Ascending aorta (tissue), 2 donors: ENCODE measurements at regions of chr2 and their contacts with region 1.

Region 1: GRCh38 chr2:157789933-157790511 is 86.1 kb downstream of the ACVR1 start:
- DNase-seq: peak; percentile 57 to 89
- H3K4me3 ChIP-seq: peak overlapping the region in 1 of 2 donors; percentile 2
- H3K27ac ChIP-seq: peak overlapping the region; percentile 70 to 77
- H3K4me1 ChIP-seq: peaks cover 14 to 66% of the 10 kb centered on the region in 2 donors
- H3K27me3 ChIP-seq: no peaks in the 10 kb centered on the region
- CTCF ChIP-seq: no peak

Region 2: DNA sequence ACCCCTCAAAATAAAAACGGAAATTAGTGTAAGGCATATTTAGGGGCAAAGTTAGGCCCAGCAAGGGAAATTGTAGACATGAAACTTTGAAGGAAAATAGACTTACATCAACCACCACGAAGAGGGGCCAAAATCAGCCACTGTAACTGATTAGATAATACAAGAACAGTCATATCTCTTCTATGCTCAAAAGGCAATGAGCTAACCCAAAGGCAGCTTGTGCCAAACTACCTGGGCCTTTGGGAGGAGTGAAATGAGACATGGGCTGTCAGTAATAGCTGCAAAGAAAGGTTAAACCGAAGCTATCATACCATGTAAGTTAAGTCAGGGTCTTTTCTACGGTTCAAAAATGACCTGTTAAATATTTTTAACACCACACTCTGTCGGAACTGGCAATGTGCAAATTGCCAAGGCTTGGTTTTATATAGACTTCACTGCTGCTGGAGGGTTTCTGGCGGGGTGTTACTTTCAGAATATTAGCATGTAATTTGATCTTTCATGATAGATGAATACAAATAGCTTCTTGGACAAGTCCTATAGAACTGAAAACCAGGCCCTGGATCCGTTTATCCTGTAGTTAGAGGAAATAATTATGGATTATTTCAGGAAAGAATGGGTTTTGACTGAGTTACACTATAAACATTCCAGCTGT is 16.5 kb after region 1 on chr2:
- intact Hi-C with region 1: loop called (anchors 2 kb)
- DNase-seq: no peak
- H3K4me3 ChIP-seq: no peak overlapping the region
- H3K27ac ChIP-seq: no peak overlapping the region
- H3K4me1 ChIP-seq: peaks cover 0 to 5% of the 10 kb centered on the region in 2 donors
- H3K27me3 ChIP-seq: no peaks in the 10 kb centered on the region
- CTCF ChIP-seq: no peak

Region 3: GRCh38 chr2:157830696-157831570 is 40.9 kb after region 1 on chr2:
- intact Hi-C with region 1: loop called (anchors 2 kb)
- DNase-seq: peak in 1 of 2 donors; percentile 75
- H3K4me3 ChIP-seq: no peak overlapping the region
- H3K27ac ChIP-seq: peak overlapping the region; percentile 61 to 87
- H3K4me1 ChIP-seq: peaks cover 3 to 27% of the 10 kb centered on the region in 2 donors
- H3K27me3 ChIP-seq: no peaks in the 10 kb centered on the region
- CTCF ChIP-seq: no peak

Region 4: GRCh38 chr2:157971697-157972096 is 181.7 kb after region 1 on chr2:
- intact Hi-C with region 1: no loop called
- DNase-seq: no peak
- H3K4me3 ChIP-seq: no peak overlapping the region
- H3K27ac ChIP-seq: no peak overlapping the region
- H3K4me1 ChIP-seq: no peaks in the 10 kb centered on the region
- H3K27me3 ChIP-seq: no peaks in the 10 kb centered on the region
- CTCF ChIP-seq: no peak